CD8-positive, alpha-beta T cell (primary cell): ENCODE measurements at regions of chr4 and their contacts with region 1.

Region 1: GRCh38 chr4:91527056-91527455 is 776.7 kb upstream of the GRID2 start:
- DNase-seq: no peak
- ATAC-seq: no peak
- H3K4me3 ChIP-seq: no peak overlapping the region
- H3K4me3 Mint-ChIP-seq: no peak overlapping the region
- H3K27ac ChIP-seq: no peak overlapping the region
- H3K27ac Mint-ChIP-seq: no peak overlapping the region
- H3K4me1 ChIP-seq: no peaks in the 10 kb centered on the region
- H3K4me1 Mint-ChIP-seq: no peaks in the 10 kb centered on the region
- H3K27me3 ChIP-seq: no peaks in the 10 kb centered on the region
- H3K27me3 Mint-ChIP-seq: no peaks in the 10 kb centered on the region
- CTCF ChIP-seq: no peak

Region 2: DNA sequence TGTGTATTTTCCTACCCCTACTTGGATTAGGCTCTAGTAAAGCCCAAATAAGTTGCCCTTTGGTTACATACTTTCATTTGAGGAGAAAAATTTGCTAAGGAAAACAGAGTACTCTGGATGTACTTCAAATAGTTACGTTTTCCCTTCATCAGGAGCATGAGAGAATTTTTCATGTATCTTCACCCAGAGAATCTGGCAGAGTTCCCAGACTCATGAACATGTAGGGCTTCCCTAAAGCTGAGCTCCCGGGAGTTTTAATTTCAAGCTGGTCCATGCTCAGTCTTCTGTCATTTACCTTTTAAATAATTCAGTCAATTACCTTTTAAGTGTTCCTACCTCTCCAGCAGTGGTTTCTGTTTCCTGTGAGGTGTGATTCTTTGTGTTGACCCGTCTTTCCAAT is 409.3 kb after region 1 on chr4:
- CTCF ChIA-PET with region 1: no interaction called
- POLR2A ChIA-PET with region 1: no interaction called
- intact Hi-C with region 1: loop called in 1 of 2 experiments (anchors 5 kb)
- DNase-seq: no peak
- ATAC-seq: no peak
- H3K4me3 ChIP-seq: no peak overlapping the region
- H3K4me3 Mint-ChIP-seq: no peak overlapping the region
- H3K27ac ChIP-seq: no peak overlapping the region
- H3K27ac Mint-ChIP-seq: no peak overlapping the region
- H3K4me1 ChIP-seq: no peaks in the 10 kb centered on the region
- H3K4me1 Mint-ChIP-seq: no peaks in the 10 kb centered on the region
- H3K27me3 ChIP-seq: no peaks in the 10 kb centered on the region
- H3K27me3 Mint-ChIP-seq: no peaks in the 10 kb centered on the region
- CTCF ChIP-seq: no peak